Activated B cell treated with CpG ODN at 0.5 μM for 24 hours (primary cell): ENCODE measurements at regions of chr22 and their contacts with region 1.

Region 1: GRCh38 chr22:30326706-30327362 is at the start of gene TBC1D10A:
- DNase-seq: peak; percentile 83
- ATAC-seq: peak; percentile 94
- H3K4me3 Mint-ChIP-seq: peak within 1 kb of the TSS; percentile 86
- H3K27ac Mint-ChIP-seq: peak within 1 kb of the TSS; percentile 82
- H3K4me1 Mint-ChIP-seq: peaks cover 45% of the 10 kb centered on the region
- H3K27me3 Mint-ChIP-seq: no peaks in the 10 kb centered on the region
- CTCF ChIP-seq: no peak
- total RNA-seq, gene TBC1D10A: 20.1 and 20.4 TPM in 2 replicates

Region 2: GRCh38 chr22:30262917-30263741 is 63.7 kb before region 1 on chr22:
- CTCF ChIA-PET with region 1: no interaction called
- POLR2A ChIA-PET with region 1: interaction called, 6 read pairs
- intact Hi-C with region 1: loop called (anchors 1 kb)
- DNase-seq: peak; percentile 72
- ATAC-seq: peak; percentile 13
- H3K4me3 Mint-ChIP-seq: peak overlapping the region; percentile 59
- H3K27ac Mint-ChIP-seq: peak overlapping the region; percentile 18
- H3K4me1 Mint-ChIP-seq: peaks cover 27% of the 10 kb centered on the region
- H3K27me3 Mint-ChIP-seq: no peaks in the 10 kb centered on the region
- CTCF ChIP-seq: peak; percentile 97

Region 3: GRCh38 chr22:30305519-30305905 is 21.3 kb before region 1 on chr22:
- CTCF ChIA-PET with region 1: interaction called, 8 read pairs
- POLR2A ChIA-PET with region 1: interaction called, 68 read pairs
- intact Hi-C with region 1: loop called (anchors 1 kb)
- DNase-seq: no peak
- ATAC-seq: peak; percentile 61
- H3K4me3 Mint-ChIP-seq: peak overlapping the region; percentile 21
- H3K27ac Mint-ChIP-seq: peak overlapping the region; percentile 81
- H3K4me1 Mint-ChIP-seq: peaks cover 100% of the 10 kb centered on the region
- H3K27me3 Mint-ChIP-seq: no peaks in the 10 kb centered on the region
- CTCF ChIP-seq: no peak

Region 4: DNA sequence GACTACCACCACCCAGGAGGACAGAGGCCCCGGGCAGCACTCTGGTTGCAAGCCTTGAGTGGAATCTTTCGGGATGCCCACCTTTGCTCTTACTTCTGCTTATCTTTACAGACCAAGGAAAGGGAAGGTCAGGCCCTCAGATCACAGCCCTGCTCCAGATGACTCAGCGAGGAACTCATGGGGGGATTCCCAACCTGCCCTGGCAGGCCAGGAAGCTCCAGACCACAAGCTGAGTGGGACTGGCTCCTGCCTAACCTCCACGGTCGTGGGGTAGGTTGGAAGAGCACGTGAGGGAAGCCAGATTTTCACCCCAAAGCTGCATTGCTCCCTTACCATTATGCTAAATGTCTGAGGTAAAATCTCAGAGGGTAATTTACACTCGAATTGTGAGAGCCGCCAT is 11.9 kb before region 1 on chr22:
- CTCF ChIA-PET with region 1: interaction called, 5 read pairs
- POLR2A ChIA-PET with region 1: interaction called, 20 read pairs
- intact Hi-C with region 1: loop called (anchors 1 kb)
- DNase-seq: no peak
- ATAC-seq: peak; percentile 50
- H3K4me3 Mint-ChIP-seq: peak overlapping the region; percentile 36
- H3K27ac Mint-ChIP-seq: peak overlapping the region; percentile 79
- H3K4me1 Mint-ChIP-seq: peaks cover 86% of the 10 kb centered on the region
- H3K27me3 Mint-ChIP-seq: no peaks in the 10 kb centered on the region
- CTCF ChIP-seq: no peak

Region 5: GRCh38 chr22:30356449-30357235 is 29.8 kb after region 1 on chr22 and contains the starts of genes CCDC157 and SF3A1:
- CTCF ChIA-PET with region 1: no interaction called
- POLR2A ChIA-PET with region 1: interaction called, 42 read pairs
- intact Hi-C with region 1: loop called (anchors 1 kb)
- DNase-seq: peak; percentile 88
- ATAC-seq: peak; percentile 86
- H3K4me3 Mint-ChIP-seq: peak within 1 kb of the TSS; percentile 92
- H3K27ac Mint-ChIP-seq: peak within 1 kb of the TSS; percentile 76
- H3K4me1 Mint-ChIP-seq: peaks cover 43% of the 10 kb centered on the region
- H3K27me3 Mint-ChIP-seq: no peaks in the 10 kb centered on the region
- CTCF ChIP-seq: no peak
- total RNA-seq, gene CCDC157: 1.8 and 2.9 TPM in 2 replicates
- total RNA-seq, gene SF3A1: 263 and 269 TPM in 2 replicates